ENCODE measurements at regions of chr14 and their contacts with region 1.

Region 1: DNA sequence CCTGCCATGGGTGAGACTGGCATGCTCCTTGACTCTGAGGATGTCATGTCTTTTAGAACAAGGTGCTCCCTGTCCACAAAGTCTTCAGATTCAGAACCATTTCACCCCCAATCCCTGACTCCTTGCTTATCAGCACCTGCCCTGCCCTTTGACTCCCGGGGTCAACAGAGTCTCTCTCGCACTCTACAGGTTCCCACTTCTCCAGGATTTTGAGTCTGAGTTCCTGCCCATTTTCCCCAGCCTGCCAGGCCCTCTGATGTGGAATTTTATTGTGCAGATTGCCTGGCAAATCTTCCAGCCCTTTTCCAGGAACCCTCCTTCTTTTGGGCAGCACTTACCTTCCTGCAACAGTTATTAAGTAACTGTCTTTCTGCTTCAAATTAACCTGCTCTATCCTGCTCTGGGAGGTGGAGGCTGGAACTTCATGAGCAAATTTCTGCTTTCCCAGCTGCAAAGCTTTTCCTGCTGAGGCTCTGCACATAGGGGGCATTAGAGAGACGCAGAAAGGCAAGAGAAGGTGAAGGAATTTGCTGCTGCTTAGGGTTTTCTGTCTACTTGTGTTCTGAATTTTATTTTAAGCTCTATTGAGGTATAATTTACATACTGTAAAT is 259.0 kb downstream of the PCNX1 start:
- DNase-seq: peak; percentile 29
- H3K4me3 Mint-ChIP-seq: no peak overlapping the region
- H3K27ac Mint-ChIP-seq: no peak overlapping the region
- H3K4me1 Mint-ChIP-seq: peaks cover 12% of the 10 kb centered on the region
- H3K27me3 Mint-ChIP-seq: peaks cover 37% of the 10 kb centered on the region

Region 2: GRCh38 chr14:70919774-70920173 is 246.5 kb before region 1 on chr14:
- CTCF ChIA-PET with region 1: no interaction called
- DNase-seq: no peak
- H3K4me3 Mint-ChIP-seq: peak overlapping the region; percentile 4
- H3K27ac Mint-ChIP-seq: peak overlapping the region; percentile 85
- H3K4me1 Mint-ChIP-seq: peaks cover 85% of the 10 kb centered on the region
- H3K27me3 Mint-ChIP-seq: no peaks in the 10 kb centered on the region

Region 3: GRCh38 chr14:71029236-71029781 is 137.0 kb before region 1 on chr14:
- CTCF ChIA-PET with region 1: no interaction called
- DNase-seq: no peak
- H3K4me3 Mint-ChIP-seq: no peak overlapping the region
- H3K27ac Mint-ChIP-seq: no peak overlapping the region
- H3K4me1 Mint-ChIP-seq: no peaks in the 10 kb centered on the region
- H3K27me3 Mint-ChIP-seq: no peaks in the 10 kb centered on the region

Region 4: GRCh38 chr14:71403656-71404055 is 237.4 kb after region 1 on chr14:
- CTCF ChIA-PET with region 1: interaction called, 11 read pairs
- DNase-seq: peak; percentile 58
- H3K4me3 Mint-ChIP-seq: no peak overlapping the region
- H3K27ac Mint-ChIP-seq: peak overlapping the region; percentile 42
- H3K4me1 Mint-ChIP-seq: peaks cover 44% of the 10 kb centered on the region
- H3K27me3 Mint-ChIP-seq: no peaks in the 10 kb centered on the region

Measured in activated naive CD4-positive, alpha-beta T cell treated with anti-CD3 and anti-CD28 coated beads, Interleukin-2, amount 10 ng/mL, durations not matched to agents 7 days and 5 days (primary cell).